Activated T-helper 2 cell treated with anti-CD3 and anti-CD28 coated beads, Interferon-gamma antibody, Interleukin-2, Interleukin-4, amounts not matched to agents 10 μg/mL and 5 μg/mL and 100 μg/mL, durations not matched to agents 14 hours and 24 hours and 36 hours (primary cell): ENCODE measurements at regions of chr15 and their contacts with region 1.

Region 1: GRCh38 chr15:45198337-45199135 is 10.8 kb upstream of the SHF start:
- DNase-seq: peak; percentile 95
- H3K4me3 Mint-ChIP-seq: no peak overlapping the region
- H3K27ac Mint-ChIP-seq: no peak overlapping the region
- H3K4me1 Mint-ChIP-seq: peaks cover 14% of the 10 kb centered on the region
- H3K27me3 Mint-ChIP-seq: no peaks in the 10 kb centered on the region

Region 2: GRCh38 chr15:45166834-45167630 is 31.5 kb before region 1 on chr15:
- intact Hi-C with region 1: loop called (anchors 1 kb)
- DNase-seq: peak; percentile 79
- H3K4me3 Mint-ChIP-seq: peak overlapping the region; percentile 64
- H3K27ac Mint-ChIP-seq: peak overlapping the region; percentile 85
- H3K4me1 Mint-ChIP-seq: peaks cover 14% of the 10 kb centered on the region
- H3K27me3 Mint-ChIP-seq: no peaks in the 10 kb centered on the region

Region 3: DNA sequence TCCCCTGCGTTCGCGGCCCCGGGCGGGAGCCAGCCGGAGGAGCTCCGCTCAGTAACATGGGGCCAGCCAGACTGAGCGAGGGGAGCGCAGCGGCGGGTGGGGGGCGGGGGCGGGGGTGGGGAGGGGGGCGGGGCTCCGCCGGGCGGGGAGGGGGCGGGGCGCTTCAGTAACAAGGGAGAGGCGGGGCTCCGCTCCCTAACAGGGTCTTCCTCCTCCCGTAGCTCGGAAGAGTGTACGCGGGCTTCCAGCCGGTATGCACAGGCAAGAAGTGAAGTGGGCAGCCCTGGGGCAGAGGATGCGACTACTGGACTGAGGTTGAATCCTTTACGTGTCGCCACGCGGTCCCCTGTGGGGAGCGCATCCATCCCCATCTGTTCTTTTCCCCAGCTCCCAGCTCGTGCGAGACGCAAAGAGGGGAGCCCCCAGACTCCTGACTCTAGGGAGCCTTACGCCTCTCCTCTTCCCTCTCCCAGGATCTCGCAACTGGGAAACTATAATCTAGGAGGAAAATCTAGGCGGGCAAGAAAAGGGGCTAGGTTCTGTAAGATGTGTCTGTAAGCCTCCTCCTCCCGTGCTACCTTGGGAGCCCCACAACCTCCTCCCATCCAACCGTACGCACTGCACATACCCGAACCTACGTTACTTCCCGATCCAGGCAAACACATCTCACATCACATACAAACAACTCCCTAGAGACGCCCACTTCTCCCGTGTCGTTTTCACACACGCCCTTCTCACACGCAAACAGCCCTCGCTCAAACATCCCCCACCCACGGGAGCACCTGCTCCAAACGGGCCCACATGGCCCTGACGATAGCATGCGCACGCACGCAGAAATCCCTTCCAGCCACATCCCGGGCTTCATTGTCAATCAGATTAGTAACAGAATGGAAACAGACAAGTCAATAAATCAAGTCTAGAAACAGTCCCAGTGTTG is 10.4 kb before region 1 on chr15 and contains the start of gene SHF:
- intact Hi-C with region 1: loop called (anchors 1 kb)
- DNase-seq: peak; percentile 26
- H3K4me3 Mint-ChIP-seq: peak within 1 kb of the TSS; percentile 89
- H3K27ac Mint-ChIP-seq: peak within 1 kb of the TSS; percentile 92
- H3K4me1 Mint-ChIP-seq: peaks cover 27% of the 10 kb centered on the region
- H3K27me3 Mint-ChIP-seq: peaks cover 7% of the 10 kb centered on the region
- total RNA-seq, gene SHF: 16.3 and 16.4 TPM in 2 replicates

Region 4: GRCh38 chr15:45637552-45638033 is 439.1 kb after region 1 on chr15:
- intact Hi-C with region 1: loop called (anchors 1 kb)
- DNase-seq: peak; percentile 47
- H3K4me3 Mint-ChIP-seq: peak overlapping the region; percentile 79
- H3K27ac Mint-ChIP-seq: peak overlapping the region; percentile 95
- H3K4me1 Mint-ChIP-seq: peaks cover 65% of the 10 kb centered on the region
- H3K27me3 Mint-ChIP-seq: no peaks in the 10 kb centered on the region